ENCODE measurements at regions of chr19 and their contacts with region 1.

Region 1: DNA sequence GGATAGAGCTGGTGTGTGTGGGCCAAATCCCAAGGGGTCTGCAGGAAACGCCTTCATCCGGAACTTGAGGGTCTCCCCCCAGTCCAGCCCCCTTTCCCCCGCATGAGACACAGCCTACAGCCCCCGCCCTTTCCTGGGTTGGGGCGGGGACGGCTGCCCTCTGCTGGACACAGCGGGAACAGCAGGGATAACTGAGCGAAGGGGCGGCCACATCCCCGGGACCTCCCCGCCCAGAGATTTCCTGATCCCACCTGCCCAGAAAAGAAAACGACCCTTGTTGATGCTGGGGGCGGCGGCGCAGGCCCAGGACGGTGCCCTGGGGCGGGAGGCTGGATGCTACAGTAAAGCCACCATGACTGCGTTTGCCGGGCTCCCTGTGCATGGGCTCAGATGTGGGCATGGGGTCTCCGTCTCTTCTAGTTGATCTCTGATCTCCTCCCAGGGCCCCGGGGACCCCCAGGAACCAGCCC is 14.2 kb downstream of the ONECUT3 start:
- DNase-seq: peak; percentile 79
- ATAC-seq: peak; percentile 59
- H3K4me3 Mint-ChIP-seq: no peak overlapping the region
- H3K27ac Mint-ChIP-seq: no peak overlapping the region
- H3K4me1 Mint-ChIP-seq: peaks cover 11% of the 10 kb centered on the region
- H3K27me3 Mint-ChIP-seq: peaks cover 99% of the 10 kb centered on the region
- CTCF ChIP-seq: peak; percentile 96

Region 2: DNA sequence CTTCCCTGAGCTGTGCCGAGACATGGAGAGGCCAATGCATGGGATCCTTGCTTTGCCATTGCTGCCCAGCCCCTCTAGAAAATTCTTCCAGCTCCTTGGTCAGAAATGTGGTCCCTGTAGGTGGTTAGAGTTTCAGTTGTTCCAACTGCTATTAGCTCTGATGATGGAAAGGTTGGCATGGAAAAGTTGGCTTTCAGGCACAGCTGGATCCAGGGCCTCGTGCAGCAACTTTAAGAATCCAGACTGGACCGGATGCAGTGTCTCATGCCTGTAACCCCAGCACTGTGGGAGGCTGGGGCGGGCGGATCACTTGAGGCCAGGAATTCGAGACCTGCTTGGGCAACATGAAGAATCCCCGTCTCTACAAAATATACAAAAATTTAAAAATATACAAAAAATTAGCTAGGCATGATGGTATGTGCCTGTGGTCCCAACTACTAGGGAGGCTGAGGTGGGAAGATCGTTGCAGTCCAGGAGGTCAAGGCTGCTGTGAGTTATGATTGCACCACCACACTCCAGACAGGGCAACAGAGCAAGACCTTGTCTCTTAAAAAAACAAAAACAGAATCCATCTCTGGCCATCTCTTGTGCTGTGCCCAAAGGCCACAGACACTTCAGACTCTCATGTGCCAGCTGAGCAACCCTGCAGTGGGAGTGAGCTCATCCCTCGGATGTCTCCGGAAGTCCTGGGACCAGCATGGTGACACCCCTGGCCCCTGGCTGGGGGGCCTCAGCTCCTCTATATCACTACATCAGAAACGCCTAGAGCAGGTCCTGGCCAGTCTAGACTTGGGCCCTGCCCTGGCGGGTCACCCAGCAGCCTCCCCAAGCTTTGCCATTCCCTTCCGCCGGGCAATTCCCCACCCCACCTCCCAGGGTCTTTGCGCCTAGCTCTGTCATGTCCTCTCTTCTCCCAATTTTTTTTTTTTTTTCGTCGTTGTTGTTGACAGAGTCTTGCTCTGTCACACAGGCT is 216.1 kb before region 1 on chr19:
- CTCF ChIA-PET with region 1: interaction called, 15 read pairs
- POLR2A ChIA-PET with region 1: no interaction called
- DNase-seq: no peak
- ATAC-seq: no peak
- H3K4me3 Mint-ChIP-seq: no peak overlapping the region
- H3K27ac Mint-ChIP-seq: no peak overlapping the region
- H3K4me1 Mint-ChIP-seq: no peaks in the 10 kb centered on the region
- H3K27me3 Mint-ChIP-seq: peaks cover 3% of the 10 kb centered on the region; the same call in 1 of the 2 replicates
- CTCF ChIP-seq: no peak

Region 3: GRCh38 chr19:1652471-1653299 is 114.8 kb before region 1 on chr19 and contains the start of gene TCF3:
- CTCF ChIA-PET with region 1: interaction called, 14 read pairs
- POLR2A ChIA-PET with region 1: no interaction called
- DNase-seq: peak; percentile 96
- ATAC-seq: peak; percentile 90
- H3K4me3 Mint-ChIP-seq: peak within 1 kb of the TSS; percentile 94
- H3K27ac Mint-ChIP-seq: no peak within 1 kb of the TSS; the same call in 1 of the 2 replicates
- H3K4me1 Mint-ChIP-seq: peaks cover 5% of the 10 kb centered on the region
- H3K27me3 Mint-ChIP-seq: no peaks in the 10 kb centered on the region; the same call in 1 of the 2 replicates
- CTCF ChIP-seq: no peak
- total RNA-seq, gene TCF3: 323 to 350 TPM (median 324 TPM) in 3 replicates

Region 4: DNA sequence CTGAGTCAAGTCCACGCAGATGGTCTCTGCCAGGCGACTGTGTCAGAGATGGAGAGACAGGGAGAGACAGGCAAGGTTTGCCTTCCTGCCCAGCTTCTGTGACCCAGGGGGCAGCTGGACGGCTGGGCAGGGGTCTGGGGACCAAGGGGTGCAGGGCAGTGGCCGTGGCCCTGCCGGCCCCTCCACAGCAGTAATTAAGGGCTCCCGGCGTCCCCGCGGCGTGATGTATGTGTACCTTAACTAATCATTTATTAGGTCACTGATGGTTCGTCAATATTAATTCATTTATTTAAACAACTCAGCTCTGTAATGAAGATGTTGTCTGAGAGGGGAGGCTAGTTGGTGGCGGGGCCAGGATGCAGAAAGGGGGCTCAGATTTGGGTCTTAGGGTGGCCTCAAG is 86.5 kb before region 1 on chr19:
- CTCF ChIA-PET with region 1: interaction called, 12 read pairs
- POLR2A ChIA-PET with region 1: no interaction called
- DNase-seq: no peak
- ATAC-seq: no peak
- H3K4me3 Mint-ChIP-seq: no peak overlapping the region
- H3K27ac Mint-ChIP-seq: no peak overlapping the region
- H3K4me1 Mint-ChIP-seq: no peaks in the 10 kb centered on the region
- H3K27me3 Mint-ChIP-seq: peaks cover 48% of the 10 kb centered on the region
- CTCF ChIP-seq: no peak

Region 5: GRCh38 chr19:1747285-1748114 is 20.0 kb before region 1 on chr19:
- CTCF ChIA-PET with region 1: interaction called, 35 read pairs
- POLR2A ChIA-PET with region 1: no interaction called
- DNase-seq: peak; percentile 70
- ATAC-seq: peak; percentile 23
- H3K4me3 Mint-ChIP-seq: peak overlapping the region; percentile 65
- H3K27ac Mint-ChIP-seq: no peak overlapping the region
- H3K4me1 Mint-ChIP-seq: peaks cover 8% of the 10 kb centered on the region
- H3K27me3 Mint-ChIP-seq: peaks cover 96% of the 10 kb centered on the region
- CTCF ChIP-seq: no peak

Region 6: DNA sequence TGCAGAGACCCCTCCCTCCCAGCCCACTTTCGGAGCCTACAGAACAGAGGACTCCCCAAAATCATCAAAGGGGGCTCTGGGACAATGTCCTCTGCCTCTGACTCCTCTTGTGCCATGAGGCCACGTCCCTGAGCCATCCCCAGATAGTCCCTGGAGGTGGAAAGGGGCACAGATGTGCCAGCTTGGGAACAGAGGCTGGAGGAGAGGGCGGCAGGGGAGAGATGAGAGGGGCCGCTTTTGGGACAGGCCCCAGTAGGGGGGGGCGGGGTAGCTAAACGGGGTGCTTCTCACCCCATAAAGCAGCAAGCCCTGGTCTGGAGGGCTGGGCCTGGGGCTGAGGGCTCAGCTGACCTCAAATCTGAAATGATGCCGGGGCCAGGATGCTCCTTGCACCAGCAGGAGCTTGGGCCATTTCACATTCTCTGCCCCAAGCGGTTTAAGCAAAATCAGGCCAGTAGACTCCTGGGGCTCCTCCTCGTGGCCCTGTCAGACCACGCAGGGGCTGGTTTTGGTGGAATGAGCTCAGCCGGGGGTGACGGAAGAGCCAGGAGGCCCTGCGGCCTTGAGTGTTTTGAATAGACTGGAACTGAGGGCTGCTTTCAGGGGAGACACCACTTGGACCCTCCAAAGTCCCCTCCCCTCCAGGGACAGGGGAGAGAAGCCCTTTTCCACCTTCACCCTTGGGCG is 12.9 kb after region 1 on chr19:
- CTCF ChIA-PET with region 1: interaction called, 55 read pairs
- POLR2A ChIA-PET with region 1: no interaction called
- DNase-seq: no peak
- ATAC-seq: no peak
- H3K4me3 Mint-ChIP-seq: no peak overlapping the region
- H3K27ac Mint-ChIP-seq: no peak overlapping the region
- H3K4me1 Mint-ChIP-seq: peaks cover 16% of the 10 kb centered on the region
- H3K27me3 Mint-ChIP-seq: peaks cover 86% of the 10 kb centered on the region
- CTCF ChIP-seq: no peak

Region 7: GRCh38 chr19:1837625-1838105 is 70.2 kb after region 1 on chr19:
- CTCF ChIA-PET with region 1: interaction called, 11 read pairs
- POLR2A ChIA-PET with region 1: no interaction called
- DNase-seq: peak; percentile 88
- ATAC-seq: peak; percentile 78
- H3K4me3 Mint-ChIP-seq: no peak overlapping the region
- H3K27ac Mint-ChIP-seq: no peak overlapping the region; the same call in 1 of the 2 replicates
- H3K4me1 Mint-ChIP-seq: 0 out of 2 replicates have a peak, but pooled peaks cover 6% of the 10 kb centered on the region
- H3K27me3 Mint-ChIP-seq: no peaks in the 10 kb centered on the region
- CTCF ChIP-seq: peak; percentile 94

Region 8: DNA sequence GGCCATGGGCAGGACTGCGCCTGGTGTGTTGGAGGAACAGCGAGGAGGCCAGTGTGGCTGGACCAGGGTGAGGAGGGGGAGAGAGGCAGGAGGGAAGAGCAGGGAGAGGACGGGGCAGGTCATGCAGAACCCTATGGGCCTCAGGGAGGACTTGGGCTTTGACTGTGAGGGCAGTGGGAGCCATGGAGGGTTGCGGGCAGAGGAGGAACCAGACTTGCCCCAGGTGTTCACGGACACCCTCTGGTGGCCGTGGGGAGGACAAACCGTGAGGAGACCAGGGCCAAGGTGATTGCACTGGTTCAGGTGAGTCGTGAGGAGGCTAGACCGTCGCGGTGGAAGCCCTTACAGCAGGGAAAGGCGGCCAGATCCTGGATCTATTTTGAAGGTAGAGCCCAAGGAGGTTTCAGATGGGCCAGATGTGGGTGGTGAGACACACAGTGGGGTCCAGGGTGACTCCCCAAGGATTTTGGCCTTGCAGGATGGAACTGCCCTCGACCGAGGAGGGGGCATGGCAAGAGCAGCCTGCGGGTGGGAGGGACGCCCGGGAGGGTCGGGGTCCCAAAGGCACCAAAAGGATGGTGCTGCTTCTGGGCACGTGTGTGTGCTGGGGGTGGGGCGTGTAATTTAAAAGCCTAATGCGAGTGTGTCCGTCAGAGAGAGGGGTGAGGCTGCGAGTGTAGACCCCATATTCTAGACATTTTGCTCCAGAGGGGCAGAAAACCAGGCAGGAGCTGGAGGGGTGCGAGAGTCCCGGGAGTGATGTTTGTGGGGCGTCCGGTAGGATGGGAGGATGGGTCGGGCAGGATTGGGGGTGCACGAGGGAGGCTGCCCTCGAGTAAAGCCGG is 83.5 kb after region 1 on chr19:
- CTCF ChIA-PET with region 1: no interaction called
- POLR2A ChIA-PET with region 1: no interaction called
- DNase-seq: no peak
- ATAC-seq: no peak
- H3K4me3 Mint-ChIP-seq: peak overlapping the region; percentile 45
- H3K27ac Mint-ChIP-seq: peak overlapping the region; percentile 76
- H3K4me1 Mint-ChIP-seq: peaks cover 38% of the 10 kb centered on the region
- H3K27me3 Mint-ChIP-seq: no peaks in the 10 kb centered on the region
- CTCF ChIP-seq: no peak

Region 9: GRCh38 chr19:1905071-1905862 is 137.8 kb after region 1 on chr19 and contains the starts of genes ADAT3 and SCAMP4:
- CTCF ChIA-PET with region 1: no interaction called
- POLR2A ChIA-PET with region 1: no interaction called
- DNase-seq: peak; percentile 100
- ATAC-seq: peak; percentile 96
- H3K4me3 Mint-ChIP-seq: peak within 1 kb of the TSS; percentile 80
- H3K27ac Mint-ChIP-seq: peak within 1 kb of the TSS; percentile 95
- H3K4me1 Mint-ChIP-seq: peaks cover 17% of the 10 kb centered on the region
- H3K27me3 Mint-ChIP-seq: no peaks in the 10 kb centered on the region
- CTCF ChIP-seq: no peak
- total RNA-seq, gene ADAT3: 15.0 to 20.3 TPM (median 15.9 TPM) in 3 replicates
- total RNA-seq, gene SCAMP4: 81.3 to 86.1 TPM (median 86.1 TPM) in 3 replicates